Activated CD4-positive, alpha-beta T cell treated with anti-CD3 and anti-CD28 coated beads for 36 hours (primary cell): ENCODE measurements at regions of chr6 and their contacts with region 1.

Region 1: GRCh38 chr6:42901536-42901957 is 14.3 kb upstream of the PTCRA start:
- DNase-seq: peak; percentile 77
- ATAC-seq: peak; percentile 93
- H3K4me3 Mint-ChIP-seq: peak overlapping the region; percentile 7
- H3K27ac Mint-ChIP-seq: no peak overlapping the region
- H3K4me1 Mint-ChIP-seq: peaks cover 9% of the 10 kb centered on the region
- H3K27me3 Mint-ChIP-seq: no peaks in the 10 kb centered on the region

Region 2: GRCh38 chr6:42661540-42662153 is 239.9 kb before region 1 on chr6:
- CTCF ChIA-PET with region 1: interaction called, 21 read pairs
- POLR2A ChIA-PET with region 1: no interaction called
- intact Hi-C with region 1: loop called (anchors 1 kb)
- DNase-seq: peak; percentile 90
- ATAC-seq: peak; percentile 91
- H3K4me3 Mint-ChIP-seq: no peak overlapping the region
- H3K27ac Mint-ChIP-seq: no peak overlapping the region
- H3K4me1 Mint-ChIP-seq: no peaks in the 10 kb centered on the region
- H3K27me3 Mint-ChIP-seq: no peaks in the 10 kb centered on the region

Region 3: GRCh38 chr6:42879372-42880239 is 21.9 kb before region 1 on chr6 and contains the start of gene RPL7L1:
- CTCF ChIA-PET with region 1: interaction called, 5 read pairs
- POLR2A ChIA-PET with region 1: no interaction called
- intact Hi-C with region 1: loop called in 1 of 2 experiments (anchors 2 kb)
- DNase-seq: peak; percentile 89
- ATAC-seq: peak; percentile 96
- H3K4me3 Mint-ChIP-seq: peak within 1 kb of the TSS; percentile 99
- H3K27ac Mint-ChIP-seq: peak within 1 kb of the TSS; percentile 100
- H3K4me1 Mint-ChIP-seq: peaks cover 20% of the 10 kb centered on the region
- H3K27me3 Mint-ChIP-seq: no peaks in the 10 kb centered on the region
- total RNA-seq, gene RPL7L1: 124 to 152 TPM

Region 4: DNA sequence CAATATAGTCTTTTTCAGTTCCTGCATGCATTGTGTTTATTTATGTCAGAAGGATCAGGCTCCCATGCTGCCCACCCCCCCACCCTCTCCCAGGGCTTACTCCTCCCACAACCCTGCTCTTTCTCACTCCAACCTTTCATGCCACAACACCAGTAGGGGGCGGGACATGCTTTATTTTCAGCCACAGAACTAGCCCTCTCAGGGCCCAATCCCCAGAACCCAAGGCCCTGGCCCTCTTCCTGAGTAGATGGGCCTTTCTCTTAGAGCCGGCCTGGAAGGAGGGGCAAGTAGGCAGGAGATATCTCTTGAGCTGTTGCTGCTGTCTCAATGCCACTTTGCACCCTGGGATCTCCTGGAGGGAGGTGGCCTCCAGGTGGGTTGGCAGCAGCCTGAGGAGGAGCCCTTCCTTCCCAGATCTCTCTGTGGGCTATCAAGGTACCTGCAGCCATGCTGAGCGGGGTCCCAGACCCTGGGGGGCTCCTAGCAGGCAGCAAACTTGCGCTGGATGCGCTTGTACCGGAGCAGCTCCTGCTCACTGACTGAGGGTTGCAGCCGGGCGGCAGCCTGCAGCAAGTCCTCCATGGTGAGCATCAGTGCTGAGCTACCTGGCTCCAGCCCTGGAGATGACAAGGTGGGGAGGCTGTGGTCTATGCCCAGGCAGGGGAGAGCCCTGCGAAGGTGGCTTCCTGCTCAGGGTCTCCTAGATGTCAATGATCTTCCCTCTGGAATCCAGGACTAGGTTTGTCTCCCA is 62.5 kb after region 1 on chr6:
- CTCF ChIA-PET with region 1: interaction called, 3 read pairs
- POLR2A ChIA-PET with region 1: no interaction called
- intact Hi-C with region 1: loop called in 1 of 2 experiments (anchors 1 kb)
- DNase-seq: peak; percentile 68
- ATAC-seq: peak; percentile 83
- H3K4me3 Mint-ChIP-seq: no peak overlapping the region
- H3K27ac Mint-ChIP-seq: no peak overlapping the region
- H3K4me1 Mint-ChIP-seq: peaks cover 11% of the 10 kb centered on the region
- H3K27me3 Mint-ChIP-seq: no peaks in the 10 kb centered on the region

Region 5: GRCh38 chr6:43053545-43054205 is 152.1 kb after region 1 on chr6 and contains the start of gene CUL7:
- CTCF ChIA-PET with region 1: interaction called, 3 read pairs
- POLR2A ChIA-PET with region 1: no interaction called
- intact Hi-C with region 1: loop called in 1 of 2 experiments (anchors 2 kb)
- DNase-seq: peak; percentile 96
- ATAC-seq: peak; percentile 99
- H3K4me3 Mint-ChIP-seq: peak within 1 kb of the TSS; percentile 99
- H3K27ac Mint-ChIP-seq: peak within 1 kb of the TSS; percentile 97
- H3K4me1 Mint-ChIP-seq: peaks cover 43% of the 10 kb centered on the region
- H3K27me3 Mint-ChIP-seq: no peaks in the 10 kb centered on the region
- total RNA-seq, gene CUL7: 16.3 to 18.0 TPM

Region 6: GRCh38 chr6:43143235-43144124 is 241.9 kb after region 1 on chr6:
- CTCF ChIA-PET with region 1: interaction called, 3 read pairs
- POLR2A ChIA-PET with region 1: no interaction called
- intact Hi-C with region 1: loop called (anchors 1 kb)
- DNase-seq: peak; percentile 90
- ATAC-seq: peak; percentile 99
- H3K4me3 Mint-ChIP-seq: no peak overlapping the region
- H3K27ac Mint-ChIP-seq: no peak overlapping the region
- H3K4me1 Mint-ChIP-seq: peaks cover 5% of the 10 kb centered on the region
- H3K27me3 Mint-ChIP-seq: no peaks in the 10 kb centered on the region